Colonic mucosa (tissue), 4 donors: ENCODE measurements at regions of chr14 and their contacts with region 1.

Region 1: GRCh38 chr14:80055667-80056496 is 155.4 kb downstream of the DIO2 start:
- DNase-seq: peak; percentile 24
- H3K4me3 ChIP-seq: no peak overlapping the region
- H3K27ac ChIP-seq: no peak overlapping the region
- H3K4me1 ChIP-seq: no peaks in the 10 kb centered on the region
- H3K27me3 ChIP-seq: no peaks in the 10 kb centered on the region
- CTCF ChIP-seq: peak; percentile 54

Region 2: GRCh38 chr14:80845856-80846255 is 790.0 kb after region 1 on chr14:
- intact Hi-C with region 1: loop called (anchors 10 kb)
- DNase-seq: no peak
- H3K4me3 ChIP-seq: no peak overlapping the region
- H3K27ac ChIP-seq: no peak overlapping the region
- H3K4me1 ChIP-seq: no peaks in the 10 kb centered on the region
- H3K27me3 ChIP-seq: no peaks in the 10 kb centered on the region
- CTCF ChIP-seq: no peak